Ascending aorta (tissue), 2 donors: ENCODE measurements at regions of chr2 and their contacts with region 1.

Region 1: DNA sequence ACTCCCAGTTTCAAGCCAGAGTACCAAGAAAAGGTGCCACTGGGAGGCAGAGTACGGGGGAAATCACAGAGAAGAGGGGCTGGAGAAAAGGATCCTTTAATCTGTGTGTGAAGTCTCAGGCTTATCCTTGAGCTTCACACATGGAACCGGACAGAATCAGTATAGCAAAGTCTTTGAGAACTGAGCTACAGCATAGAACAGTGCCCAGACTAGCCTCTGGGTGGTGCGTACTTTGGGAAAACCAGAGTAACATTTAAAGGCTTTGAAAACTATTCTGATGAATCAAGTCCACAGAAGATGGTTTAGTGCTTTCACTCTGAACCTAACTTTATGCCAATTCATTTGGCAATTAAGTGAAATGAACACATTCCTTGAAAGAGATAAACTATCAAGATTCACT is 83.1 kb downstream of the BABAM2 start:
- DNase-seq: no peak
- H3K4me3 ChIP-seq: no peak overlapping the region
- H3K27ac ChIP-seq: no peak overlapping the region
- H3K4me1 ChIP-seq: no peaks in the 10 kb centered on the region
- H3K27me3 ChIP-seq: no peaks in the 10 kb centered on the region
- CTCF ChIP-seq: no peak

Region 2: GRCh38 chr2:28036307-28036706 is 62.7 kb after region 1 on chr2:
- intact Hi-C with region 1: loop called (anchors 5 kb)
- DNase-seq: no peak
- H3K4me3 ChIP-seq: no peak overlapping the region
- H3K27ac ChIP-seq: no peak overlapping the region
- H3K4me1 ChIP-seq: peaks cover 0 to 8% of the 10 kb centered on the region in 2 donors
- H3K27me3 ChIP-seq: no peaks in the 10 kb centered on the region
- CTCF ChIP-seq: no peak